Sciatic nerve (tissue), 2 donors: ENCODE measurements at regions of chr14 and their contacts with region 1.

Region 1: DNA sequence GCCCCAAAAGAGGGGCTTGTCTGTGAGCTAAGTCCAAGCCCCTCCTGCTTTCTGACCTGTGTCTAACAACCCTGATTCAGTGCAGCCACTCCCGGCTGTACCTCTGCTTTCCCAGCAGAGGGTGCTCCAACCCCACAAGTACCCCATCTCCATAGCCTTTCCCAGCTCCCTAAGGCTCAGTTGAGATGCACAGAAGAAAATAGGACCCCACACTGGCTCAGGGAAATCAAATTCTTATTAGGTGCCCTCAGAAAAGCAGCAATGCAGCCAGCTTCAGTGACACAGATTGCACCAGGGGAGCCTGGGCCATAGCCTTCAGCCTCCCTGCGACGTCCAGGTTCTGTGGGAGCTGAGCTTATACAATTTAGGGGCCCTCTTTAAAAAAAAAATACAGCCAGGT is 49.9 kb downstream of the LRRC74A start:
- DNase-seq: peak; percentile 77
- ATAC-seq: peak; percentile 92

Region 2: DNA sequence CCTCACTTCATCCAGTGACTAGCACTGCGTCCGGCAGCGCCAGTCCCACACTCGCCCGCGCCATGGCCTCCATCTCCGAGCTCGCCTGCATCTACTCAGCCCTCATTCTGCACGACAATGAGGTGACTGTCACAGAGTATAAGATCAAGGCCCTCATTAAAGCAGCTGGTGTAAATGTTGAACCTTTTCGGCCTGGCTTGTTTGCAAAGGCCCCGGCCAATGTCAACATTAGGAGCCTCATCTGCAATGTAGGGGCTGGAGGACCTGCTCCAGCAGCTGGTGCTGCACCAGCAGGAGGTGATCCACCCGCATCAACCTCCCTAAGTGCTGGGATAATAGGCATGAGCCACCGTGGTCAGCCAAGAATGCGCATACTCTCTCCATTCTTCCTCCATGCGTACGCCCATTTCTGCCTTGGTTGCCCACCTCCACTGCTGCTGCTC is 92.6 kb after region 1 on chr14:
- intact Hi-C with region 1: no loop called
- DNase-seq: no peak
- ATAC-seq: no peak

Region 3: DNA sequence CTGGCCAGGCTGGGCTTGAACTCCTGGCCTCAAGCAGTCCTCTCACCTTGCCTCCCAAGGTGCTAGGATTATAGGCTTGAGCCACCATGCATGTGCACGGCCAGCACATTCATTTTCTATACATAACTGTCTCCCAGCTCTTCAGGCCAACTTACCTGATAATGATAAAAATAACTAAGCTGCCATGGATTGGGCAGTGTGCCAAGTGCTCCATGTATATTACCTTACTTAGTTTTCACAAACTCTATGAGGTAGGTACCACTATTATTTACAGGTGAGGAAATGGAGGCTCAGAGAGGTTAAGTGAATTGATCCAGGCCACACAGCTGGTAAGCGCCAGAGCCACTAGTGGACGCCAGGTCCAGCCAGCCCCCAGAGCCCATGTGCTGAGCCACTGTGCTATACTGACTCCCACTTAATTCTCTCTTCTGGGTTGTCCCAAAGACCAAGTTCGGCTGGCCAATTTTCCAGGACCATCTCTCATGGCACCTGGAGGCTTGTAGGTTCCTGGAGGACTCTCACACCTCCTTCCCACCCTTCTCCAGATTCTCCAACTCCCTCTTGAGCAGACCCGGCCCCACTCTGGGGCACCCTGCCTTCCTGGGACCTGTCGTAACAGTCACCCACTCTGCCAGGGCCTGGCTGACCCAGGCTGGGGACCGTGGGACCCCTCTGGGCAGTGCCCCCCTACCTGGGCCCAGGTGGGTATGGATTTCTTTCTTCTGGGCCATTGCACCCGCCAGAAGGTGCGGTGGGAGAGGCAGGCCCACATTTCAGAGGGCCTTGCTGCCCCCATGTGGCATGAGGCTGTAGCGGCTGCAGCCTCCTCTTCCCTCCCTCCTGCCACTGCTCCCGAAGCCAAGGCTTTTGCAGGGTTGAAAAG is 191.8 kb after region 1 on chr14:
- intact Hi-C with region 1: loop called (anchors 5 kb)
- DNase-seq: peak; percentile 84
- ATAC-seq: peak; percentile 85

Region 4: GRCh38 chr14:77314043-77314442 is 438.0 kb after region 1 on chr14:
- intact Hi-C with region 1: loop called (anchors 10 kb)
- DNase-seq: peak; percentile 49
- ATAC-seq: peak; percentile 58